Esophagus muscularis mucosa (tissue), 4 donors: ENCODE measurements at regions of chrX and their contacts with region 1.

Region 1: GRCh38 chrX:131841496-131842410 is 181.3 kb upstream of the STK26 start:
- DNase-seq: no peak
- H3K4me3 ChIP-seq: no peak overlapping the region
- H3K27ac ChIP-seq: no peak overlapping the region
- H3K4me1 ChIP-seq: peaks cover 0 to 7% (median 2%) of the 10 kb centered on the region in 4 donors
- H3K27me3 ChIP-seq: no peaks in the 10 kb centered on the region
- CTCF ChIP-seq: peak; percentile 68 to 90 (median 72)
- EP300 ChIP-seq: no peak
- POLR2A ChIP-seq: no peak

Region 2: DNA sequence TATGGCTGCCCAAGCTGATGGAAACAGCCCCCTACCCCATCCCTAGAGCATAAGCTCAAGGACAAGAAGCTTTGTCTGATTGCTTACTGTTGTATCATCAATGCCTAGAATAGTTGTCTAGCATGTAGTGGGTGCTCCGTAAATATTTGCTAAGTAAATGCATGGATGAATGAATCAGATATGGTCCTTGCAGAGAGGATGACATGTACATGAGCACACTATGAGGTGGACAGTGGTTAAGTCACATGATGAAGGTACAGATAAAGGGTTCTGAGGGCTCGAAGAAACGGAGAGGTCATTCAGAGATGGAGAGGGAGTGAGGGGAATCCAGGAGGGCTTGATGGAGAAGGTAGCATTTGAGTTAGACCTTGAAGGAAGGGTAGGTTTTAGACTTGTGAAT is 1225.8 kb before region 1 on chrX:
- intact Hi-C with region 1: no loop called
- DNase-seq: no peak
- H3K4me3 ChIP-seq: no peak overlapping the region
- H3K27ac ChIP-seq: no peak overlapping the region
- H3K4me1 ChIP-seq: no peaks in the 10 kb centered on the region
- H3K27me3 ChIP-seq: no peaks in the 10 kb centered on the region
- CTCF ChIP-seq: no peak
- EP300 ChIP-seq: no peak
- POLR2A ChIP-seq: no peak

Region 3: GRCh38 chrX:131955099-131955777 is 113.5 kb after region 1 on chrX:
- intact Hi-C with region 1: no loop called
- DNase-seq: no peak
- H3K4me3 ChIP-seq: no peak overlapping the region
- H3K27ac ChIP-seq: no peak overlapping the region
- H3K4me1 ChIP-seq: no peaks in the 10 kb centered on the region
- H3K27me3 ChIP-seq: peaks cover 0 to 6% (median 0%) of the 10 kb centered on the region in 4 donors
- CTCF ChIP-seq: no peak
- EP300 ChIP-seq: no peak
- POLR2A ChIP-seq: no peak

Region 4: DNA sequence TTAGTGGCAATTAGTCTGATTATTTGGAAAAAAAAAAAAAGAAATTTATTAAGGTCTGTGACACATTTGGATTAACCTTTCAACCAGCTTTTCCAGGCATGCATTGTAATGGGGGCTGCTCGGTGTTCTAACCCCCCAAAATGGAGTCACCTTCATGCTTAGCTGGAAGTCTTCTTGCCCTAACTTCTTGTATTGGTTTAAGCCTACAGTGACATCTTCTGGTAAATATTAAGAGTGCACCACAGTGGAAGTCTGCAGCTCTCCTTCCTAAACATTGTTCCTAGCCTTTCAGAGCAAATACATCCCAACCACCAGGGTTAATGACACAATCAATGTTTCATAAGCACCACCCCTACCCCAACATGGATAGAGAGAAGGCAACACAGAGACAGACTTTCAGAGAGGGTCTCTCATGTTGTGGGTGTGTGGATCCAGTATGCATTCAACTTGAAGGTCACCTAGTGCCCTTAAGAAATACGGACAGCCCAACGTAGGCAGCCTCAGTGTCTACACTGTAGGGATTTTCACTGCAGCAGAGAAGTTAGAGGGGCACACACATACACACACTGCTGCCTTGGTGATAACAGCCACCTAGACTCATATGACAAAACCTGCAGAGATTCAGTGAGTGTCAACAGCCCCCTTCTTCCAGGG is 790.0 kb after region 1 on chrX:
- intact Hi-C with region 1: loop called (anchors 5 kb)
- DNase-seq: no peak
- H3K4me3 ChIP-seq: no peak overlapping the region
- H3K27ac ChIP-seq: no peak overlapping the region
- H3K4me1 ChIP-seq: no peaks in the 10 kb centered on the region
- H3K27me3 ChIP-seq: peaks cover 0 to 4% (median 0%) of the 10 kb centered on the region in 4 donors
- CTCF ChIP-seq: peak; percentile 41 to 52 (median 50)
- EP300 ChIP-seq: no peak
- POLR2A ChIP-seq: no peak